ENCODE measurements at regions of chr15 and their contacts with region 1.

Region 1: GRCh38 chr15:94097552-94097951 is 133.8 kb upstream of the MCTP2 start:
- DNase-seq: no peak
- H3K4me3 ChIP-seq: no peak overlapping the region
- H3K27ac ChIP-seq: no peak overlapping the region
- H3K4me1 ChIP-seq: no peaks in the 10 kb centered on the region
- H3K27me3 ChIP-seq: no peaks in the 10 kb centered on the region
- CTCF ChIP-seq: no peak
- POLR2A ChIP-seq: no peak

Region 2: GRCh38 chr15:93803421-93804153 is 294.0 kb before region 1 on chr15:
- intact Hi-C with region 1: loop called (anchors 5 kb)
- DNase-seq: no peak
- H3K4me3 ChIP-seq: peak overlapping the region; percentile 14 to 41 (median 27)
- H3K27ac ChIP-seq: peak overlapping the region; percentile 13 to 55
- H3K4me1 ChIP-seq: no peaks in the 10 kb centered on the region
- H3K27me3 ChIP-seq: no peaks in the 10 kb centered on the region
- CTCF ChIP-seq: no peak
- POLR2A ChIP-seq: no peak

Region 3: GRCh38 chr15:94238539-94239118 is 141.1 kb after region 1 on chr15:
- intact Hi-C with region 1: no loop called
- DNase-seq: no peak
- H3K4me3 ChIP-seq: no peak overlapping the region
- H3K27ac ChIP-seq: peak overlapping the region in 1 of 2 donors; percentile 69
- H3K4me1 ChIP-seq: no peaks in the 10 kb centered on the region
- H3K27me3 ChIP-seq: no peaks in the 10 kb centered on the region
- CTCF ChIP-seq: no peak
- POLR2A ChIP-seq: no peak